ENCODE measurements at regions of chr13 and their contacts with region 1.

Region 1: GRCh38 chr13:109786457-109787134 is at the start of gene IRS2:
- DNase-seq: peak; percentile 96 to 97
- ATAC-seq: peak; percentile 86
- H3K4me3 ChIP-seq: peak within 1 kb of the TSS; percentile 97 to 98
- H3K27ac ChIP-seq: peak within 1 kb of the TSS; percentile 89 to 98
- H3K4me1 ChIP-seq: peaks cover 3% of the 10 kb centered on the region in 2 donors
- H3K27me3 ChIP-seq: no peaks in the 10 kb centered on the region
- total RNA-seq, gene IRS2: 15.8 to 31.2 TPM

Region 2: GRCh38 chr13:108915634-108916512 is 870.7 kb before region 1 on chr13:
- intact Hi-C with region 1: loop called in 1 of 2 experiments (anchors 5 kb)
- DNase-seq: peak; percentile 93 to 95
- ATAC-seq: peak; percentile 90
- H3K4me3 ChIP-seq: peak overlapping the region in 1 of 2 donors; percentile 47
- H3K27ac ChIP-seq: peak overlapping the region; percentile 94 to 98
- H3K4me1 ChIP-seq: no peaks in the 10 kb centered on the region
- H3K27me3 ChIP-seq: no peaks in the 10 kb centered on the region

Region 3: DNA sequence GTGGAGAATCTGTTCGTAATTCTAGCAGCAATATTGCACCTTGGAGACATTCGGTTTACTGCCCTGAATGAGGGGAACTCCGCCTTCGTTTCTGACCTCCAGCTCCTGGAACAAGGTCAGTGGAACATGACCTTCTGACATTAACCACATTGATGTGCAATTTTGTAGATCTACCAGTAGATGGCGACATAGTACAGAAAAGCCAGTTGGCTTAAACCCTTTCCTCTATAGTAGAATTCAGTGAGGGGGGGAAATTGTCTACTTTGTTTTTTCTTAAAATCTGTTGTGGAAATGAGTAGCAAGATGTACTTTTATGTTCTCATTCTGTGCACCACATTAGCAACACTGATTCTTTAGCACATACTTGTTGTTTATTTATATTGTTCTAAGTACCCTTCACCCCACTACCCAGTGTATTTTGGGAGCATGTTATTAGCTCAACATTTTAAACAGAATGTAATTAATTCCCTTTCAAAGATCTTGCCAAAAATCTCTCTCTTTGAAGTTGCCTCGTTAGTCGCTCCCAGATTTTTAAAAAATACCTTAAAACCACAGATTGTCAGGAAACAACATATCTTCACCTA is 825.0 kb before region 1 on chr13:
- intact Hi-C with region 1: loop called (anchors 5 kb)
- DNase-seq: no peak
- ATAC-seq: peak; percentile 83
- H3K4me3 ChIP-seq: no peak overlapping the region
- H3K27ac ChIP-seq: no peak overlapping the region
- H3K4me1 ChIP-seq: no peaks in the 10 kb centered on the region
- H3K27me3 ChIP-seq: no peaks in the 10 kb centered on the region

Region 4: DNA sequence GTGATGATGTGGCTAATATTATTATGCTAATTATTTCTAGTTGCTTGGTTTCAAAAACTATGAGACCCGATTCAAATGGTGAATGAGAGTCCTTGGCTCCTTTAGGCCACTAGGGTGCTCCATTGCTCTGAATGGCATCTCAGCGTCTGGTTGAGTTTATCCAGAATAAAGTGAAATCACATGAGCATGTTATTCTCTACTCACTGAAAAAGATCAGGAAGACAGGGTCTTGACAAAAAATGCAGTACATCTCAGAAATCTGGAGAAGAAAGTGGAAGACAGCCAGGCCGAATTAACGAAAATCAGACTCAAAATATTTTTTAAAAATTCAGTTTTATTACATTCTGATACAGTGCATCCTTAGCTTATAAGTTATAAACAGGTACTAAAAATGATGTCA is 641.0 kb before region 1 on chr13:
- intact Hi-C with region 1: loop called (anchors 2 to 5 kb)
- DNase-seq: no peak
- ATAC-seq: peak; percentile 80
- H3K4me3 ChIP-seq: no peak overlapping the region
- H3K27ac ChIP-seq: no peak overlapping the region
- H3K4me1 ChIP-seq: no peaks in the 10 kb centered on the region
- H3K27me3 ChIP-seq: no peaks in the 10 kb centered on the region

Region 5: DNA sequence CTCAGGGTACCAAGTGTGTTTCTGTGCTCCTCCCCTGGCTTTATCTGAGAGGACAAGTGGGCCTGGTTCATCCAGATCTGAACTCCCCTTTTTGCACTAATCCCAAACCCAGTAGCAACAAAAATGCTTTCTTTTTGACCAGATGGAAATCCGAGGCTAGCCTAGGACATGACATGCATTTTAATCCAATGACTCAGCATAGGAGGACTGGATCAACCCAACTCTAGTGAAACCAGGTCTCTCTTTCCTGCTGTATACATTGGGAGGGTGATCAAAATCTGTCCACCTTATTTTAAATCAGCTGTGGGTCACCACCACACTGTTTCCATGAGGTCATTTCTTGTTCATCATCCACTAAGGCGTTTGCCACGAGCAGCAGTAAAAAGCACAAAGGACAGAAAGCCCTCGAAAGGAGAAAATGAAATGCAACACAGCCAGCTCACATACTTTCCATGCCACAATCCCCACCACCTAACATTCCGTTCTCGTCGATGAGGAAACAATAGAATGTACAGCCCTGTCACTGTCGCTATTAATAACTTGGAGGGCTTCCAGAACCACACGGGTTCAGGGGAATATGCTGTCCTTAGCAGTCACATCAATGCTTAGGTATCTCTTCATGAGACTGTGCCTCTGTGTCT is 543.2 kb before region 1 on chr13:
- intact Hi-C with region 1: loop called in 1 of 2 experiments (anchors 10 kb)
- DNase-seq: no peak
- ATAC-seq: peak; percentile 50
- H3K4me3 ChIP-seq: peak overlapping the region in 1 of 2 donors; percentile 18
- H3K27ac ChIP-seq: peak overlapping the region; percentile 49 to 97
- H3K4me1 ChIP-seq: peaks cover 1 to 2% of the 10 kb centered on the region in 2 donors
- H3K27me3 ChIP-seq: no peaks in the 10 kb centered on the region

Region 6: DNA sequence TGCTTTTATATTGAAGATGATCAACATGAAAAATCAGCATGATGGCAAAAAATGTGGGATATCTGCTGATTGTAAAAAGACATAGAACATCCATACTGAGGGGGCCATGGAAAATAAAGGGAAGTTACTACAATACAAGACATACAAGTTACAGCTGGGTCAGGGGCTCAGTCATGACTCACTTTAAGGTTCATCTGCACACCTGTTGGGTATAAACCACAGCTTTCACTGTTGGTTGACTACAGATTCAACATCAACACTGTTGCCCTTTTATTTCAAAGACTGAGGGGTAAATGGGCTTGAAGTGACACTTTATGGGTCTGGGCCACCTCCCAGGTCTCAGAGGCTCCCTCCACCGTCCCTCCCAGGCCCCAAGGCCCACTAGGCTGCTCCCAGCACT is 97.9 kb after region 1 on chr13:
- intact Hi-C with region 1: no loop called
- DNase-seq: no peak
- ATAC-seq: no peak
- H3K4me3 ChIP-seq: no peak overlapping the region
- H3K27ac ChIP-seq: no peak overlapping the region
- H3K4me1 ChIP-seq: no peaks in the 10 kb centered on the region
- H3K27me3 ChIP-seq: no peaks in the 10 kb centered on the region

Region 7: GRCh38 chr13:110023729-110024644 is 237.4 kb after region 1 on chr13:
- intact Hi-C with region 1: loop called in 1 of 2 experiments (anchors 5 kb)
- DNase-seq: peak; percentile 78 to 84
- ATAC-seq: peak; percentile 91
- H3K4me3 ChIP-seq: no peak overlapping the region
- H3K27ac ChIP-seq: peak overlapping the region; percentile 93 to 95
- H3K4me1 ChIP-seq: peaks cover 7 to 8% of the 10 kb centered on the region in 2 donors
- H3K27me3 ChIP-seq: no peaks in the 10 kb centered on the region

Measured in aorta (tissue), 5 donors.